ENCODE measurements at regions of chr13 and their contacts with region 1.

Region 1: GRCh38 chr13:101144808-101145419 is 271.4 kb downstream of the NALCN start:
- DNase-seq: no peak
- ATAC-seq: peak in 1 of 4 donors; percentile 31
- H3K4me3 ChIP-seq: no peak overlapping the region
- H3K27ac ChIP-seq: no peak overlapping the region
- H3K4me1 ChIP-seq: peaks cover 0 to 6% (median 0%) of the 10 kb centered on the region in 12 donors
- H3K27me3 ChIP-seq: peaks cover 0 to 15% (median 0%) of the 10 kb centered on the region in 9 donors
- CTCF ChIP-seq: peak; percentile 52 to 81 (median 71)
- POLR2A ChIP-seq: no peak

Region 2: DNA sequence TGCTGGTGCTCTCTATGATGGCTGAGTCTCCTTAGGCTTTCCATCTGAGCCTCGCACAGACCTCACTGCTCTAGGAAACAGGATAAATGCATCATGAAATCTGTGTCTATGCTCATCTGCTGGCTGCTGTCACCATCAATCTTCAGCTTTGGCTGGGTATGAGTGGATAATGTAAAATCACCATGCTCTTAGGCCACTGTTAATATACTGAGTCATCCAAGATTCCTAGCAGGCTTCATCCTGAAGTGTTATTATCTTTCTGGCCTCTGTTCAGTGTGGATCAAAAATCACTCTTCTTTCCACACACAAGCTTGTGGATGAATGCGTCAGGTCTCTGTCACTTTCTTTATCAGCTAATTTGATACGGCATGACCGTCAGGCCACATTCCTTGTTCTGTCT is 46.0 kb before region 1 on chr13:
- intact Hi-C with region 1: no loop called
- DNase-seq: no peak
- ATAC-seq: no peak
- H3K4me3 ChIP-seq: no peak overlapping the region
- H3K27ac ChIP-seq: no peak overlapping the region
- H3K4me1 ChIP-seq: no peaks in the 10 kb centered on the region
- H3K27me3 ChIP-seq: no peaks in the 10 kb centered on the region
- CTCF ChIP-seq: no peak
- POLR2A ChIP-seq: no peak

Region 3: DNA sequence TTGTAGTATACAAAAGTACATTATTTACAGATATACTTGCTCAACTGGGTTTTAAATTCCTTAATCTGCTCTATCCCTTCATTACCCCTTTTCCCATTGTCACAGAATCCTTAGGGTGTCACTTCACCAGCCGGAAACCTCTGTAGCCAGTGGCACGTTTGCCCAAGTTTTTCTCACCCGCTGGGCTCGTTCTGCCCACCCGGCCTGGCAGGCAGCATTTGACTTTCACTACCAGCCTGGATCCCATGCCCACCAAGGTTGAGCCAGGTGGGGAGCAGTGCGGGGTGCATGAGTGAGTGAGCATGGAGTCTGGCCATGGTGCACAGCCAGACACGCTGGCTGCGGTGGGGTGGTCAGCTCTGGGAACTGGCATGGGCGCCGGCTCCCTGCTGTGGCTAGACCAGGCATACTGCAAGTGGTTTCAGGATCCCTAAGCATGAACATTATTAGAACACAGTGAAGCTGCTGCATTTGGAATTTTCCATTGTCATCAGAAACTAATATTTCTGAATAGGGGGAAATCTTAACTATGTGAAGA is 173.1 kb after region 1 on chr13:
- intact Hi-C with region 1: no loop called
- DNase-seq: no peak
- ATAC-seq: no peak
- H3K4me3 ChIP-seq: no peak overlapping the region
- H3K27ac ChIP-seq: no peak overlapping the region
- H3K4me1 ChIP-seq: no peaks in the 10 kb centered on the region
- H3K27me3 ChIP-seq: no peaks in the 10 kb centered on the region
- CTCF ChIP-seq: no peak
- POLR2A ChIP-seq: no peak

Region 4: GRCh38 chr13:101452519-101453485 is 307.9 kb after region 1 on chr13 and contains the start of gene ITGBL1:
- intact Hi-C with region 1: loop called in 2 of 10 experiments (anchors 10 kb)
- DNase-seq: peak in 2 of 5 donors; percentile 38 to 60
- ATAC-seq: peak in 3 of 4 donors; percentile 36 to 58 (median 40)
- H3K4me3 ChIP-seq: peak within 1 kb of the TSS; percentile 8 to 65 (median 50)
- H3K27ac ChIP-seq: peak within 1 kb of the TSS in 2 of 12 donors; percentile 20 to 25
- H3K4me1 ChIP-seq: peaks cover 0 to 7% (median 0%) of the 10 kb centered on the region in 12 donors
- H3K27me3 ChIP-seq: peaks cover 0 to 5% (median 0%) of the 10 kb centered on the region in 9 donors
- CTCF ChIP-seq: no peak
- POLR2A ChIP-seq: no peak
- total RNA-seq, gene ITGBL1: 1.3 to 5.9 (median 3.1) TPM

Region 5: GRCh38 chr13:101474419-101474957 is 329.6 kb after region 1 on chr13:
- intact Hi-C with region 1: loop called in 3 of 10 experiments (anchors 5 to 10 kb)
- DNase-seq: no peak
- ATAC-seq: peak in 1 of 4 donors; percentile 46
- H3K4me3 ChIP-seq: no peak overlapping the region
- H3K27ac ChIP-seq: no peak overlapping the region
- H3K4me1 ChIP-seq: peaks cover 0 to 5% (median 0%) of the 10 kb centered on the region in 12 donors
- H3K27me3 ChIP-seq: no peaks in the 10 kb centered on the region
- CTCF ChIP-seq: peak in 4 of 12 donors; percentile 28 to 42 (median 34)
- POLR2A ChIP-seq: no peak

Region 6: DNA sequence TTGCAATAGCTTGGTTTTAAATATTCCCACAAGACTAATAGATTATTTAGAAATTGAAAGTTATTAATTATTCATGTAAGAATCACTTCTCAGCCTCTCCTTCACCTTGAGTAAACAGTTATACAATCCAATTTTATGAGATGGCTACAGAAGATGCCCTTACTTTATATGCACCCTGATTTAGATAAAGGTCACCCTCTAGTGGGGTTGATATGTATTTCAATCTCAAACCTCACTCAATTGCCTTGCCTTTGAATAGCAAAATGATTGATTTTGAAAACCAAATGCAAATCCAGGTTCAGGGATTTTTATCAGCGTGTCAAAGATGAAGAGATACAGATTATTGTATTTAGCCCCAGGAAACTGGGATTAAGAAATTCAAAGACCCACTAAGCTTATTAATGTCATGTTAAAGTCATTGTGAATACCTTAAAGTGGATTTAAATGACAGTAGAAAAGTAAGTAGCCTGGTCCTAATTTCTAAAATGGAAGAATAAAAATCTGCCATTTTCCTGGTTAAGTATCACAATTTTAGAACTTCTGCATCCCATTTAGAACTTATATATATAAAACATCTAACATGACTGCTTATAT is 612.6 kb after region 1 on chr13:
- intact Hi-C with region 1: loop called in 7 of 10 experiments (anchors 5 to 10 kb)
- DNase-seq: no peak
- ATAC-seq: peak in 2 of 4 donors; percentile 67 to 72
- H3K4me3 ChIP-seq: no peak overlapping the region
- H3K27ac ChIP-seq: no peak overlapping the region
- H3K4me1 ChIP-seq: no peaks in the 10 kb centered on the region
- H3K27me3 ChIP-seq: no peaks in the 10 kb centered on the region
- CTCF ChIP-seq: peak; percentile 26 to 56 (median 44)
- POLR2A ChIP-seq: no peak

Region 7: GRCh38 chr13:101916108-101916757 is 771.3 kb after region 1 on chr13:
- intact Hi-C with region 1: loop called in 2 of 10 experiments (anchors 10 kb)
- DNase-seq: peak; percentile 25 to 66 (median 45)
- ATAC-seq: peak; percentile 68 to 90 (median 84)
- H3K4me3 ChIP-seq: peak overlapping the region; percentile 29 to 59 (median 48)
- H3K27ac ChIP-seq: no peak overlapping the region
- H3K4me1 ChIP-seq: peaks cover 0 to 21% (median 4%) of the 10 kb centered on the region in 12 donors
- H3K27me3 ChIP-seq: peaks cover 9 to 75% (median 38%) of the 10 kb centered on the region in 9 donors
- CTCF ChIP-seq: peak in 11 of 12 donors; percentile 11 to 56 (median 43)
- POLR2A ChIP-seq: no peak

Region 8: DNA sequence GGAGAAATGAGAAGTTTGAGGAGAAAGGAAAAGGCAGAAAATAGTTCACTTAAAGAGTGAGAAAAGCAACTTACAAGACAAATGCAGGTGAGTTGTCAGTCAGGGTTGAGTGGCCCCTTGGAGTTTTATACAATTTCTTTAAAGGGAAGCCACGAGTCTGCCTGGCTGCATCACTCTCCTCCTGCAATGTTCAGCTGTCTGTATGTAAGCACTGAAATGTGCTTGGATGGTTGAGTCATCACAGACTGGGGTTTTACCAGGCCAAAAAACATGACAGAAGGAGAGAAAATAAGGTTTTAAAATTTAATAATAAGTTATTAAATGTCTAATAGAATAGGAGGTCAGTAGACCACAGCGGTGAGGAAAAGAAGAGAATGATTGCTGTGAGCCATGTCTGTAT is 1307.9 kb after region 1 on chr13:
- intact Hi-C with region 1: loop called in 1 of 10 experiments (anchors 10 kb)
- DNase-seq: no peak
- ATAC-seq: no peak
- H3K4me3 ChIP-seq: no peak overlapping the region
- H3K27ac ChIP-seq: no peak overlapping the region
- H3K4me1 ChIP-seq: no peaks in the 10 kb centered on the region
- H3K27me3 ChIP-seq: no peaks in the 10 kb centered on the region
- CTCF ChIP-seq: no peak
- POLR2A ChIP-seq: no peak